ENCODE measurements at regions of chr19 and their contacts with region 1.

Region 1: GRCh38 chr19:15508035-15508710 is at the start of gene CYP4F22:
- DNase-seq: peak in 4 of 14 experiments; percentile 23 to 37 (median 28)
- ATAC-seq: peak; percentile 26
- H3K4me3 ChIP-seq: peak within 1 kb of the TSS; percentile 39
- H3K4me3 Mint-ChIP-seq: peak within 1 kb of the TSS; percentile 76
- H3K27ac ChIP-seq: no peak within 1 kb of the TSS
- H3K27ac Mint-ChIP-seq: no peak within 1 kb of the TSS
- H3K4me1 ChIP-seq: peaks cover 23% of the 10 kb centered on the region
- H3K4me1 Mint-ChIP-seq: peaks cover 22% of the 10 kb centered on the region
- H3K27me3 ChIP-seq: peaks cover 7 to 8% of the 10 kb centered on the region in 2 experiments
- H3K27me3 Mint-ChIP-seq: peaks cover 18% of the 10 kb centered on the region
- CTCF ChIP-seq: no peak
- total RNA-seq, gene CYP4F22: 0.19 to 0.28 TPM

Region 2: DNA sequence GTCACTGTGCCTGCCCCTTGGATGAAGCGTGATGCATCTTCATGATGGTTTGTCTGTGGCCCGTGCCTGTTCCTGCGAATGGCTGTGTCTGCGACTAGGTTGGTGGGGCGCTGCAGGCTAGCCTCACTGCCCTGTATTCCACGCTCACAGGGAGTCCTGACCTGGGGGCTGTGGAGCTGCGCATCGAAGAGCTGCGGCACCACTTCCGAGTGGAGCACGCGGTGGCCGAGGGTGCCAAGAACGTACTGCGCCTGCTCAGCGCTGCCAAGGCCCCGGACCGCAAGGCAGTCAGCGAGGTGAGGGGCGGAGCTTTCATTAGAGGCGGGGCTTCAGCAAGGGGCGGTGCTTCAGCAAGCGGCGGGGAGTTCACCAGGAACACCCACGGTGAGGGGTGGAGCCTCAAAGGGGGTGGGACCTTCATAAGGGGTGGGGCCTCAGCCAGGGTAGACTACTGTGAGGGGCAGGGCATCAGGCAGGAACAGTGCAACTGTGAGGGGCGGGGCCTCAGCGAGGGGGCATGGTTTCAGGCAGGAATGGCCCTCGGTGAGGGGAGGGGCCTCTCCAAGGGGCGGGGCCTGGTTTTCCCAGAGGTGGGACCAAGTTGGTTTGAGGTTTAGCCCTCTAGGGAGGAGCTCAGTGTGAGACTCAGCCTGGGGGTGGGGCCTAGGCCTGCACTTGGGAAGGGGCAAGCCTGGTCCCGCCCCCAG is 1057.9 kb before region 1 on chr19:
- CTCF ChIA-PET with region 1: no interaction called
- POLR2A ChIA-PET with region 1: no interaction called
- intact Hi-C with region 1: no loop called
- DNase-seq: peak in 11 of 14 experiments; percentile 13 to 83 (median 49)
- ATAC-seq: peak; percentile 99
- H3K4me3 ChIP-seq: no peak overlapping the region
- H3K4me3 Mint-ChIP-seq: no peak overlapping the region
- H3K27ac ChIP-seq: no peak overlapping the region
- H3K27ac Mint-ChIP-seq: peak overlapping the region; percentile 33
- H3K4me1 ChIP-seq: peaks cover 19% of the 10 kb centered on the region
- H3K4me1 Mint-ChIP-seq: peaks cover 11% of the 10 kb centered on the region
- H3K27me3 ChIP-seq: no peaks in the 10 kb centered on the region
- H3K27me3 Mint-ChIP-seq: no peaks in the 10 kb centered on the region
- CTCF ChIP-seq: no peak

Region 3: DNA sequence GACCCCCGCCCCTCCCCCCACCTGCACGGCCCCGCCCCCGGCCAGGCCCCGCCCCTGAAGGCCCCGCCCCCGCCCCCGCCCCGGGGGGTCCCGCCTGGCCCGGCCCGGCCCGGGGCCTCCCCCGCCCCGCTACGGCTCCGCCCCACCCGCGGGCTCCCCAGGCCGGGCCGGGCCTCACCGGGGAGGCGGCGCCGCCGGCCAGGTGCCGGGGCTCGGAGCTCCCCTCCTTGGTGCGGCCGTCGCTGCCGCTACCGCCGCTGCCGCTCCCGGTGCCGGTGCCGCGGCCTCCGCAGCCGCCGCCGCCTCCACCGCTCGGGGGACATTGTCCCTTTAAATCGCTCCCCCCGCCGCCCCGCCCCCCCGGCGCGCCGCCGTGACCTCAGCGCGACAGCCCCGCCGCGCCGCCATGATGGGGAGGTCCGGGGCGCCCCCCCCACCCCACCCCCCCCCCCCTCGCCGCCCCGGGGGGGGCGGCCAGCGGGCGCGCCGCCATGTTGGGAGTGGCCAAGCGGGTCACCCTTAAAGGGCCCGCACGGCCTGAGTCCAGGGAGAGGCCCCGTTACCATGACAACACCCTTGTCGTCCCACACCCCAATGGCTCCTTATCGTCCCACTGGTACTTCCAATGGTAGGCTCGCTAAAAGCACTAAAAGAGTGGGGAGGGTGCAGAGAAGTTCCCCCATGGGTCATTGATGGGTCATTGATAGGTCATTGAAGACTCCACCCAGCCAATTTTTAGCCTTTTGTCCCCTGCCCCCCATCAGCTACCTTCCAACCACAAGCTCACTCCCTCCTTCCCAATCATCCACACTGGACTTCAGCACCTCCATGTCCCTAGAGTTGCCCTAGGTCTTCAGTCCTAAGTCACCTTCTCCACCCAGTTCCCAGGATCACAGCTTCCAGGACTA is 58.3 kb before region 1 on chr19 and contains the start of gene WIZ:
- CTCF ChIA-PET with region 1: no interaction called
- POLR2A ChIA-PET with region 1: no interaction called
- intact Hi-C with region 1: no loop called
- DNase-seq: peak; percentile 75 to 92 (median 84)
- ATAC-seq: peak; percentile 83
- H3K4me3 ChIP-seq: peak within 1 kb of the TSS; percentile 47
- H3K4me3 Mint-ChIP-seq: peak within 1 kb of the TSS; percentile 92
- H3K27ac ChIP-seq: peak within 1 kb of the TSS in 1 of 2 donors; percentile 79
- H3K27ac Mint-ChIP-seq: peak within 1 kb of the TSS; percentile 81
- H3K4me1 ChIP-seq: peaks cover 30% of the 10 kb centered on the region
- H3K4me1 Mint-ChIP-seq: peaks cover 30% of the 10 kb centered on the region
- H3K27me3 ChIP-seq: no peaks in the 10 kb centered on the region
- H3K27me3 Mint-ChIP-seq: no peaks in the 10 kb centered on the region
- CTCF ChIP-seq: no peak
- total RNA-seq, gene WIZ: 12.9 to 14.3 TPM

Region 4: DNA sequence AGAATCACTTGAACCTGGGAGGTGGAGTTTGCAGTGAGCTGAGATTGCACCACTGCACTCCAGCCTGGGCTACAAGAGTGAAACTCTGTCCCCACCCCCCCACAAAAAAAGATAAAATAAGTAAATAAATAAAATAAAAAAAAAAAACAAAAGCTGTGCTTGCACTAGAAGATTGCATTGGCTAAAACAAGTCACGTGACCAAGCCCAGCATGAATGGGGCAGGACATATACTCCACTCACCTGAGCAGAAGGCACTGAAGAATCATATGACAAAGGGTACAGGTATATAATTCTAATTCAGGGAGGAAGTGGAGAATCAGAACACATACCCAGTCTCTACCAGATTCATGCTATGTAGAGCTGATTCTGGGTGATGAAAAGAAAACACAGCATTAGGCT is 36.8 kb after region 1 on chr19:
- CTCF ChIA-PET with region 1: no interaction called
- POLR2A ChIA-PET with region 1: no interaction called
- intact Hi-C with region 1: loop called in 1 of 2 experiments (anchors 5 kb)
- DNase-seq: no peak
- ATAC-seq: no peak
- H3K4me3 ChIP-seq: no peak overlapping the region
- H3K4me3 Mint-ChIP-seq: no peak overlapping the region
- H3K27ac ChIP-seq: no peak overlapping the region
- H3K27ac Mint-ChIP-seq: no peak overlapping the region
- H3K4me1 ChIP-seq: no peaks in the 10 kb centered on the region
- H3K4me1 Mint-ChIP-seq: no peaks in the 10 kb centered on the region
- H3K27me3 ChIP-seq: no peaks in the 10 kb centered on the region
- H3K27me3 Mint-ChIP-seq: no peaks in the 10 kb centered on the region
- CTCF ChIP-seq: no peak

Region 5: DNA sequence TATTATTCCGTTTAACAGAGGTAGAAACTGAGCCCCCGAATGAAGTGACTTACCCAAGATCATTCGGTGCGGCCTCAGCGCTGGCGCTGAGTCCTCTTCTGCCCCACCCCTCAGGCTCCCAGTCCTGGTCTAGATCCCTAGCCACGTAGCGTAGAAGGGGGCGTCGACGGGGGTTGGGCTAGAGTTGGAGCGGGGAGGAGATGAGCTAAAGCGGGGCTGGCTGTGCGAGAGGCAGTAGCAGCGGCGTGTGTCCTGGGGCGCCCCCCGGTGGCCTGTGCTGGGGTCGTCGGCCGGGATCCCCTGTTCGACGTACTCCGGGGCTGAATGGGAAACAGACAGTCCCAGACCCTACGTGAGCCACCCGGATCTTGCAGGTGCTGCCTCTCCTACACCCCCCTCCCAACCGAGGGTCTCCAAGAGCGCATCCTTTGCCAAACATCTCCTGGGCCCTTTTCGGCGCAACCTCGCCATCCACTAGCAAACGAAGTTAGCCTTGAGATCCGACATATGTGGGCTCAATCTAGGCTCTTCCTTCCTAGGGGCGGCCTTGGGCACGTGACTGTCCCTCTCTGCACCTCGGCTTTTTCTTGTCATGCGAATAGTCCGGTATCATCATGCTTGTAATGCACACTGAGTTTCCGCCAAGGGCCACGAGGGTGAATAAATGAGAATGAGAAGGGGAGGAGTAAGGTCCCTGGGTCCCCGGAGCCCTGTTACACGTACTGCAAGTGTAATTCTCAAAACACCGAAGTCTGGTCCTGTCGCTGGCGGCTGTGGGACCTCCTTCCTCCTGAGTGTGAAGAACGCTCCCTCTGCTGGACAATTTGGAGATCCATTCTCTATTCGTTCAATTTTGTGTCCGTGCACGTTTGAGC is 47.8 kb after region 1 on chr19:
- CTCF ChIA-PET with region 1: no interaction called
- POLR2A ChIA-PET with region 1: no interaction called
- intact Hi-C with region 1: no loop called
- DNase-seq: peak; percentile 92 to 99 (median 96)
- ATAC-seq: peak; percentile 86
- H3K4me3 ChIP-seq: peak overlapping the region; percentile 60
- H3K4me3 Mint-ChIP-seq: peak overlapping the region; percentile 83
- H3K27ac ChIP-seq: peak overlapping the region; percentile 55 to 73
- H3K27ac Mint-ChIP-seq: peak overlapping the region; percentile 83
- H3K4me1 ChIP-seq: peaks cover 31% of the 10 kb centered on the region
- H3K4me1 Mint-ChIP-seq: peaks cover 16% of the 10 kb centered on the region
- H3K27me3 ChIP-seq: peaks cover 0 to 3% of the 10 kb centered on the region in 2 experiments
- H3K27me3 Mint-ChIP-seq: peaks cover 4% of the 10 kb centered on the region
- CTCF ChIP-seq: peak; percentile 81